ENCODE measurements at regions of chr21 and their contacts with region 1.

Region 1: DNA sequence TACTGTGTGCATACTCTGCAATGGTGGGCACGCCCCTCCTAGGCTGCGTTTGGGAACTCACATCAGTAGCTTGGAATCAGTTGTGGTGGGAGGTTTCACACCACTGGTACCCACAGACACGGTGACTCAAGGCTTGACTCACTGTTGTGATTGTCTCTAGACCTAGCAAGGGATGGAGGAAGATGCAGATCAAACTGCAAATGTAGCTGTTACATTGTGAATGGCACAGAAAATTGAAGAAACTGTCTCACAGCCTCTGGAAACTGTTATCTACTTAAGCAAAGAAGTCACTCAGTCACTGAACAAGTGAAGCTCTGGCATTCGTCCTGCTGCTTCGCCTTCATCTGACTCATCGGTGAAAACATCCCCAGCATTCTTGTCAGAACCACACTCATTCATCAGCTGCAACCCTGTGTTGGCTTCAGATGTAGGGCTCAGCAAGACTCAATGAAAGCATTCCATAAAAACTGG is 59.5 kb downstream of the POFUT2 start:
- DNase-seq: no peak
- H3K4me3 ChIP-seq: no peak overlapping the region
- H3K27ac ChIP-seq: no peak overlapping the region
- H3K4me1 ChIP-seq: peaks cover 7% of the 10 kb centered on the region
- H3K27me3 ChIP-seq: no peaks in the 10 kb centered on the region
- CTCF ChIP-seq: no peak
- POLR2A ChIP-seq: no peak

Region 2: DNA sequence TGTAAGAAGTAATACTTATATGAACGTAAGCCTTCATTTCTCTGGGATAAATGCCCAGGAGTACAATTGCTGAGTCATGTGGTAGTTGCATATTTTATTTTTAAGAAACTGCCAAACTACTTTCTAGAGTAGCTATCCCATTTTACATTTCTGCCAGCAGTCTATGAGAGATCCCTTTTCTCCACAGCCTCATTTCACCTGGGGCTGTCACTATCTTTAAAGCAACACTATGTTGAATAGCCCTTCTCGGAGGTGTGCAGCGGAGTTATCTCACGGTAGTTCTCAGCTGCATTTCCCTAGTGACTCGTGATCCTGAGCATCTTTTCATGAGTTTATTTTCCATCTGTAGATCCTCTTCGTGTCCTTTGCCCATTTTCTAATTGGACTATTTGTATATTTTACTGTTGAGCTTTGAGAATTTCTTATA is 60.4 kb before region 1 on chr21:
- intact Hi-C with region 1: loop called (anchors 10 kb)
- DNase-seq: no peak
- H3K4me3 ChIP-seq: no peak overlapping the region
- H3K27ac ChIP-seq: no peak overlapping the region
- H3K4me1 ChIP-seq: no peaks in the 10 kb centered on the region
- H3K27me3 ChIP-seq: no peaks in the 10 kb centered on the region
- CTCF ChIP-seq: no peak
- POLR2A ChIP-seq: no peak

Measured in prostate gland (tissue), 2 donors.